ENCODE measurements at regions of chr11 and their contacts with region 1.

Region 1: GRCh38 chr11:47426061-47426956 is at the start of gene PSMC3:
- DNase-seq: peak; percentile 93 to 99 (median 98)
- ATAC-seq: peak; percentile 98
- H3K4me3 ChIP-seq: peak within 1 kb of the TSS; percentile 100
- H3K4me3 Mint-ChIP-seq: peak within 1 kb of the TSS; percentile 100
- H3K27ac ChIP-seq: peak within 1 kb of the TSS; percentile 84
- H3K27ac Mint-ChIP-seq: peak within 1 kb of the TSS; percentile 90
- H3K4me1 ChIP-seq: peaks cover 30% of the 10 kb centered on the region
- H3K4me1 Mint-ChIP-seq: peaks cover 25% of the 10 kb centered on the region
- H3K27me3 ChIP-seq: no peaks in the 10 kb centered on the region
- H3K27me3 Mint-ChIP-seq: no peaks in the 10 kb centered on the region
- CTCF ChIP-seq: no peak
- total RNA-seq, gene PSMC3: 51.3 to 59.5 TPM

Region 2: GRCh38 chr11:46845740-46846509 is 580.4 kb before region 1 on chr11 and contains the start of gene CKAP5:
- CTCF ChIA-PET with region 1: no interaction called
- POLR2A ChIA-PET with region 1: no interaction called
- intact Hi-C with region 1: loop called in 1 of 2 experiments (anchors 10 kb)
- DNase-seq: peak; percentile 64 to 91 (median 79)
- ATAC-seq: peak; percentile 90
- H3K4me3 ChIP-seq: peak within 1 kb of the TSS; percentile 82
- H3K4me3 Mint-ChIP-seq: peak within 1 kb of the TSS; percentile 99
- H3K27ac ChIP-seq: peak within 1 kb of the TSS; percentile 2 to 29
- H3K27ac Mint-ChIP-seq: peak within 1 kb of the TSS; percentile 93
- H3K4me1 ChIP-seq: peaks cover 29% of the 10 kb centered on the region
- H3K4me1 Mint-ChIP-seq: peaks cover 37% of the 10 kb centered on the region
- H3K27me3 ChIP-seq: no peaks in the 10 kb centered on the region
- H3K27me3 Mint-ChIP-seq: no peaks in the 10 kb centered on the region
- CTCF ChIP-seq: no peak
- total RNA-seq, gene CKAP5: 23.2 to 26.9 TPM

Region 3: DNA sequence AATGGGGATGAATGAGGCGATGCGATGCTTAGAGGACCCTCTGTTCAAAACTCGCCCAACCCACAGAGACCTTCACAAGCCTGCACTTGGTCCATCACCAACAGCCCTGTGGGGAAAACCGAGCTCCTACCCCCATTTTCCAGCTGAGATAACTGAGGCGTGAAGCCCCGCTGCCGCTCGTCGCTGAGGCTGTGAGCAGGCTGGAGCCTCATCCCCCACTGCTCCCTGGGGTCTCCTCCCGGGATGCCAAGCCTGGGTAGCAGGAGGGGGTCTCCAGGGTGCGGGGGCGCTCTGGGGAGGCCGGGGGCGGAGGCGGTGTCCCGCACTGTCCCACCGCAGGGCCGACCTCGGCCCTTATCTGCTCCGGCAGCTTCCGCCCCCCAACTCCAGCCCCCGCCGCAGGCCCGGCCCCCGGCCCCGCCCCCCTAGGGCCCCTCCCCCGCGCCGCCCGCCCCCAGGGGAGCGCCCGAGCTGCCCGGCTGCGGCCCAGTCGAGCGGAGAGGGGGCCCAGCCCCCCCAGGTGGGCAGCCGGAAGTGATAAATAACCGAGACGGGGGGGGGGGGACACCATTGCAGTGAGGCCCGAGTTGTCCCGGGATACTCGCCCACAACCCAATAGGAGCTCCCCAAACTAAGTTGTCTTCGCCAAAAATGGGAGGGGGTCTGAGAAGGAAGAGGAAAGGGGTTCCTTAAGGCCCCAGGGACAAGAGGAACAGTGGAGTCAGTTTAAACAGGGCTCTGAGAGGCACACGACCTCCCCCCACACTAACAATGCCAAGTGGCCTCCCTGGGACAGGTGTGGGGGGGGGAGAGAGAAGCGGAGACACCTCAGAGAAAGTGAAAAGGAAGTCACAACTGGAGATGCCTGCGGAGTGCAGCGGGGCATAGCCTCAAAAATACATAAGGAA is 26.2 kb before region 1 on chr11:
- CTCF ChIA-PET with region 1: no interaction called
- POLR2A ChIA-PET with region 1: interaction called, 10 read pairs
- intact Hi-C with region 1: no loop called
- DNase-seq: peak in 10 of 14 experiments; percentile 31 to 70 (median 50)
- ATAC-seq: peak; percentile 76
- H3K4me3 ChIP-seq: peak overlapping the region; percentile 71
- H3K4me3 Mint-ChIP-seq: peak overlapping the region; percentile 90
- H3K27ac ChIP-seq: peak overlapping the region; percentile 65 to 67
- H3K27ac Mint-ChIP-seq: peak overlapping the region; percentile 78
- H3K4me1 ChIP-seq: peaks cover 34% of the 10 kb centered on the region
- H3K4me1 Mint-ChIP-seq: peaks cover 33% of the 10 kb centered on the region
- H3K27me3 ChIP-seq: no peaks in the 10 kb centered on the region
- H3K27me3 Mint-ChIP-seq: no peaks in the 10 kb centered on the region
- CTCF ChIP-seq: no peak

Region 4: GRCh38 chr11:47407746-47408590 is 18.3 kb before region 1 on chr11 and contains the start of gene SLC39A13:
- CTCF ChIA-PET with region 1: interaction called, 4 read pairs
- POLR2A ChIA-PET with region 1: interaction called, 14 read pairs
- intact Hi-C with region 1: loop called in 1 of 2 experiments (anchors 1 kb)
- DNase-seq: peak; percentile 78 to 95 (median 89)
- ATAC-seq: peak; percentile 86
- H3K4me3 ChIP-seq: peak within 1 kb of the TSS; percentile 74
- H3K4me3 Mint-ChIP-seq: peak within 1 kb of the TSS; percentile 99
- H3K27ac ChIP-seq: peak within 1 kb of the TSS; percentile 84 to 88
- H3K27ac Mint-ChIP-seq: peak within 1 kb of the TSS; percentile 95
- H3K4me1 ChIP-seq: peaks cover 40% of the 10 kb centered on the region
- H3K4me1 Mint-ChIP-seq: peaks cover 17% of the 10 kb centered on the region
- H3K27me3 ChIP-seq: no peaks in the 10 kb centered on the region
- H3K27me3 Mint-ChIP-seq: no peaks in the 10 kb centered on the region
- CTCF ChIP-seq: peak; percentile 84
- total RNA-seq, gene SLC39A13: 36.6 to 39.2 TPM

Region 5: GRCh38 chr11:47642099-47642855 is 216.0 kb after region 1 on chr11 and contains the start of gene MTCH2:
- CTCF ChIA-PET with region 1: no interaction called
- POLR2A ChIA-PET with region 1: no interaction called
- intact Hi-C with region 1: loop called in 1 of 2 experiments (anchors 5 kb)
- DNase-seq: peak; percentile 91 to 99 (median 95)
- ATAC-seq: peak; percentile 92
- H3K4me3 ChIP-seq: peak within 1 kb of the TSS; percentile 96
- H3K4me3 Mint-ChIP-seq: peak within 1 kb of the TSS; percentile 90
- H3K27ac ChIP-seq: peak within 1 kb of the TSS; percentile 88 to 91
- H3K27ac Mint-ChIP-seq: peak within 1 kb of the TSS; percentile 89
- H3K4me1 ChIP-seq: peaks cover 28% of the 10 kb centered on the region
- H3K4me1 Mint-ChIP-seq: peaks cover 26% of the 10 kb centered on the region
- H3K27me3 ChIP-seq: no peaks in the 10 kb centered on the region
- H3K27me3 Mint-ChIP-seq: no peaks in the 10 kb centered on the region
- CTCF ChIP-seq: peak; percentile 6
- total RNA-seq, gene MTCH2: 11.8 to 12.7 TPM

Region 6: GRCh38 chr11:47786373-47786772 is 360.1 kb after region 1 on chr11:
- CTCF ChIA-PET with region 1: no interaction called
- POLR2A ChIA-PET with region 1: no interaction called
- intact Hi-C with region 1: no loop called
- DNase-seq: no peak
- ATAC-seq: no peak
- H3K4me3 ChIP-seq: no peak overlapping the region
- H3K4me3 Mint-ChIP-seq: no peak overlapping the region
- H3K27ac ChIP-seq: no peak overlapping the region
- H3K27ac Mint-ChIP-seq: no peak overlapping the region
- H3K4me1 ChIP-seq: no peaks in the 10 kb centered on the region
- H3K4me1 Mint-ChIP-seq: no peaks in the 10 kb centered on the region
- H3K27me3 ChIP-seq: no peaks in the 10 kb centered on the region
- H3K27me3 Mint-ChIP-seq: no peaks in the 10 kb centered on the region
- CTCF ChIP-seq: no peak

Measured in CD4-positive, alpha-beta T cell (primary cell).